ENCODE measurements at regions of chr20 and their contacts with region 1.

Region 1: DNA sequence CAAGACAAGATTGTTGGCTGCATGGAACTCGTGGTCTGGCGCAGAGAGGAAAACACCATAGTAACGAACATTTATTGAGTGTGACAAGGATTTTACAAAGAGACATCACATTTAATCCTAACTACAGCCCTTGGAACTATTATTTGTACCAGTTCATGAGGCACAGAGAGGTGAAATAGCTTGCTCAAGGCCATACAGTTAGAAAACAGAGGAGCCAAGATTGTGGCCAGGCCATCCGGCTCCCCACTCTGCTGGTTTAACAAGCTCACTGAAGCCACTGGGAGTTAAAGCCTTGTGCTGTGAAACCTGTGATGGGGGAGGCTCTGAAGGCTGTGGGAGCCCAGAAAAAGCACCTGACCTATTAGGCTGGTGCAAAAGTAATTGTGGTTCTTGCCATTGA is 74.9 kb upstream of the ZNFX1 start:
- DNase-seq: no peak
- ATAC-seq: no peak
- H3K4me3 ChIP-seq: no peak overlapping the region
- H3K27ac ChIP-seq: peak overlapping the region; percentile 54; the same call in 1 of the 2 replicates
- H3K4me1 ChIP-seq: no peaks in the 10 kb centered on the region
- H3K27me3 ChIP-seq: no peaks in the 10 kb centered on the region
- CTCF ChIP-seq: no peak

Region 2: GRCh38 chr20:49384437-49385088 is 31.8 kb after region 1 on chr20:
- CTCF ChIA-PET with region 1: no interaction called
- POLR2A ChIA-PET with region 1: interaction called, 11 read pairs
- in situ Hi-C with region 1: no loop called
- intact Hi-C with region 1: no loop called
- DNase-seq: peak; percentile 13
- ATAC-seq: no peak
- H3K4me3 ChIP-seq: no peak overlapping the region
- H3K27ac ChIP-seq: peak overlapping the region; percentile 94
- H3K4me1 ChIP-seq: peaks cover 45% of the 10 kb centered on the region
- H3K27me3 ChIP-seq: no peaks in the 10 kb centered on the region
- CTCF ChIP-seq: peak; percentile 93

Measured in Panc1 (cell line).